A673 (cell line): ENCODE measurements at regions of chr9 and their contacts with region 1.

Region 1: DNA sequence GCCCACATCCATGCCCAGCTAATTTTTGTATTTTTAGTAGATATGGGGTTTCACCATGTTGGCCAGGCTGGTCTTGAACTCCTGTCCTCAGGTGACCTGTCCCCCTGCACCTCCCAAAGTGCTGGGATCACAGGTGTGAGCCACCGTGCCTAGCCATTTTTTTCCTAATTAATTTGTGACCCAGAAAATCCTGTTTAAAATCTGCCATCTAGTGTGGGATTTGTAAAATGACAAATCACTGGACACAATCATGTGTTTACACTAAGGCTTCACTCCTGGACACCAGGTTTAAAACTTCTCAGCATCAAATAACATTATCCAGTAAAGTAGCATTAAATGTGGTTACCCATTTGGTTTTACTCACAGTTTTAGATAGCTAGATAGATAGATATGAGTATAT is 18.6 kb upstream of the KDM4C start:
- DNase-seq: no peak
- H3K4me3 ChIP-seq: no peak overlapping the region
- H3K27ac ChIP-seq: no peak overlapping the region
- H3K4me1 ChIP-seq: no peaks in the 10 kb centered on the region
- H3K27me3 ChIP-seq: no peaks in the 10 kb centered on the region
- CTCF ChIP-seq: peak; percentile 45; the same call in 1 of the 2 replicates

Region 2: DNA sequence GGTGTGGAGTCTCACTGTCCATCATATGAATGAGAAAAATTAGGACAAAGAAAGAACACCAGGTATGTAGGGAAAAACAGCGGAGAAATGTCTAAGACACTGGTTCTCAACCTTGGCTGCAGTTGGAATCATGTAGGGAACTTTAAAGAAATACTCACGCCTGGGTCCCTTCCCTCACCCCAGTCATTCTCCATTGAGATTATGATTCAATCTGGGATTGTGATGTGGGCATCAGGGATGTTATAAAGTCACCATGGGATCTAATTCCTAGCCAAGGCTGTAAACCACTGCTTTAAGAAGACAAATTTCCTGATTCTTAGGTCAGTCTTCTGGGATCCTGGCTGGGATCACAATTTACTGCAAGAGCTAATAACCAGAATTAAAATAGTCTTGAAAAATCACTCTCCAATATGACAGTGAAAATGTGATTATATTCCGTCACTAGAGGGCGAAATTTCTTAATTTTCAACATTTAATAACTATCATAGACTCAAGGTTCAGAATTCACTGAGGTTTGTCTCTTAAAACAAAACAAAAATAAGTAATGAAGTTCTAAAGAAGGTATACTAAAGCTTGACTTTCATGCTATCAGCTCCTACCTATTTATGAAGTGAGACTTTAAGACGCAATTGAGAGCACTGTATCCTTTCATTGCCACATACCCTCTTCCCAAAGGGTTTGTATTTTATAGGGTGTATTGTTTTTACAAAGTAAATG is 154.2 kb before region 1 on chr9:
- CTCF ChIA-PET with region 1: no interaction called
- POLR2A ChIA-PET with region 1: no interaction called
- intact Hi-C with region 1: loop called (anchors 1 kb)
- DNase-seq: peak; percentile 40
- H3K4me3 ChIP-seq: no peak overlapping the region
- H3K27ac ChIP-seq: no peak overlapping the region
- H3K4me1 ChIP-seq: no peaks in the 10 kb centered on the region
- H3K27me3 ChIP-seq: no peaks in the 10 kb centered on the region
- CTCF ChIP-seq: peak; percentile 64

Region 3: GRCh38 chr9:6645355-6646292 is 93.6 kb before region 1 on chr9 and contains the start of gene GLDC:
- CTCF ChIA-PET with region 1: no interaction called
- POLR2A ChIA-PET with region 1: no interaction called
- intact Hi-C with region 1: no loop called
- DNase-seq: peak; percentile 55
- H3K4me3 ChIP-seq: peak within 1 kb of the TSS; percentile 39
- H3K27ac ChIP-seq: no peak within 1 kb of the TSS
- H3K4me1 ChIP-seq: peaks cover 4% of the 10 kb centered on the region
- H3K27me3 ChIP-seq: peaks cover 72% of the 10 kb centered on the region
- CTCF ChIP-seq: no peak
- total RNA-seq, gene GLDC: 0.32 and 1.4 TPM in 2 replicates